ENCODE measurements at regions of chr19 and their contacts with region 1.

Region 1: DNA sequence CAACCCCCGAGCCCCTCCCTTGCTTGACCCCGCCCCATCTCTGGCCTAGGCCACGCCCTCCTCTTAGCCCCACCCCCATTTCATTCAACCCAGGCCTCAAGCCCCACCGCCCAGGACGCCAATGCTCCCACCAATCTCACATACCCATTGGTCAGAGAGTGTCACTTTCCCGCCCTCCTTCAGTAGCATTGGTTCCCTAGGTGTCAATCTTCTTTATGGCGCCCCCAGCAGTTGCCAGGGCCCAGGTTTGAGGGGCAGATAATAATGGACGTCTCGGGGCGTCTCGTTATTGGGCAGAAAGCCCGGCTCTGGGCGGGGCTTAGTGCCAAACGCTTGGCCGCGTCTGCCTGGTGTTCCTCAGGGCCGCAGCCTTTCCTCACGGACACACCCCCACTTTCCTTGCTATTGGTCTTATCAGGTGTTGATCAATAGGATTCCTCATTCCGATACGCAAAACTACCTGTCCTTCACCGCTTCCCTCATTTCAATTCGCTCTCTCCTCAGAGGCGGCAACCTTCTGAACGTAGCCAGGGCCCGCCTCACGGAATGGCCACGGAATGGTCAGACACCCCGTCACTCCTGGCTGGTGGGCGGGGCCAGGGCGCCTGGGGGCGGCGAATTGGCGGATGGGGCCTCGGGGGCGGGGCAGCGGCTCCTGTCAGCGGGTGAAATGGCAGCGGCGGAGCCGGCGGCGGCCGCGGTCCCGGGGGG is at the start of gene EVI5L:
- DNase-seq: peak; percentile 99 to 100
- H3K4me3 ChIP-seq: peak within 1 kb of the TSS; percentile 50 to 69 (median 61)
- H3K27ac ChIP-seq: no peak within 1 kb of the TSS
- H3K4me1 ChIP-seq: peaks cover 0 to 8% (median 6%) of the 10 kb centered on the region in 4 experiments; a peak in 5 of 7 replicates
- H3K27me3 ChIP-seq: peaks cover 0 to 3% (median 2%) of the 10 kb centered on the region in 4 experiments; a peak in 1 of 7 replicates
- CTCF ChIP-seq: no peak
- EP300 ChIP-seq: no peak
- POLR2A ChIP-seq: no peak
- RAD21 ChIP-seq: no peak
- total RNA-seq, gene EVI5L: 10.4 and 11.0 TPM in 2 replicates

Region 2: GRCh38 chr19:7799640-7800355 is 29.9 kb before region 1 on chr19:
- CTCF ChIA-PET with region 1: interaction called, 16 read pairs
- POLR2A ChIA-PET with region 1: interaction called, 3 read pairs
- DNase-seq: peak; percentile 41 to 88
- H3K4me3 ChIP-seq: peak overlapping the region; percentile 23 to 55 (median 32); a peak in 7 of 8 replicates
- H3K27ac ChIP-seq: no peak overlapping the region
- H3K4me1 ChIP-seq: peaks cover 0 to 3% (median 1%) of the 10 kb centered on the region in 4 experiments; a peak in 2 of 7 replicates
- H3K27me3 ChIP-seq: peaks cover 0 to 2% (median 0%) of the 10 kb centered on the region in 4 experiments; a peak in 1 of 7 replicates
- CTCF ChIP-seq: peak in 2 of 3 experiments; percentile 44 to 68; a peak in 3 of 4 replicates
- EP300 ChIP-seq: no peak
- POLR2A ChIP-seq: 0 out of 3 replicates have a peak, but pooled peaks of 1 of the 2 experiments have one; percentile 47
- RAD21 ChIP-seq: peak; percentile 76 to 79

Region 3: GRCh38 chr19:7852851-7853769 is 23.4 kb after region 1 on chr19:
- CTCF ChIA-PET with region 1: interaction called, 17 read pairs
- POLR2A ChIA-PET with region 1: interaction called, 4 read pairs
- DNase-seq: peak in 1 of 2 experiments; percentile 97
- H3K4me3 ChIP-seq: peak overlapping the region in 2 of 4 experiments; percentile 19 to 48; a peak in 4 of 8 replicates
- H3K27ac ChIP-seq: no peak overlapping the region
- H3K4me1 ChIP-seq: peaks cover 0 to 14% (median 6%) of the 10 kb centered on the region in 4 experiments; a peak in 5 of 7 replicates
- H3K27me3 ChIP-seq: peaks cover 0 to 2% (median 0%) of the 10 kb centered on the region in 4 experiments; a peak in 1 of 7 replicates
- CTCF ChIP-seq: peak; percentile 84 to 85 (median 85)
- EP300 ChIP-seq: no peak
- POLR2A ChIP-seq: no peak
- RAD21 ChIP-seq: peak; percentile 86 to 89

Region 4: GRCh38 chr19:7861955-7862951 is 32.5 kb after region 1 on chr19:
- CTCF ChIA-PET with region 1: interaction called, 19 read pairs
- POLR2A ChIA-PET with region 1: interaction called, 4 read pairs
- DNase-seq: peak; percentile 83 to 99
- H3K4me3 ChIP-seq: peak overlapping the region; percentile 30 to 66 (median 50)
- H3K27ac ChIP-seq: no peak overlapping the region
- H3K4me1 ChIP-seq: peaks cover 4 to 33% (median 20%) of the 10 kb centered on the region in 4 experiments; a peak in 6 of 7 replicates
- H3K27me3 ChIP-seq: peaks cover 8 to 43% (median 31%) of the 10 kb centered on the region in 4 experiments
- CTCF ChIP-seq: peak; percentile 9 to 31 (median 31); a peak in 3 of 4 replicates
- EP300 ChIP-seq: no peak
- POLR2A ChIP-seq: peak in 1 of 2 experiments; percentile 45; a peak in 1 of 3 replicates
- RAD21 ChIP-seq: peak in 1 of 2 experiments; percentile 19; a peak in 1 of 4 replicates

Region 5: GRCh38 chr19:7961921-7962626 is 132.4 kb after region 1 on chr19:
- CTCF ChIA-PET with region 1: no interaction called
- POLR2A ChIA-PET with region 1: no interaction called
- DNase-seq: no peak
- H3K4me3 ChIP-seq: no peak overlapping the region
- H3K27ac ChIP-seq: no peak overlapping the region
- H3K4me1 ChIP-seq: no peaks in the 10 kb centered on the region
- H3K27me3 ChIP-seq: no peaks in the 10 kb centered on the region
- CTCF ChIP-seq: no peak
- EP300 ChIP-seq: no peak
- POLR2A ChIP-seq: no peak
- RAD21 ChIP-seq: no peak

Measured in H1 (cell line).